ENCODE measurements at regions of chr1 and their contacts with region 1.

Region 1: GRCh38 chr1:21200767-21201166 is 24.1 kb upstream of the EIF4G3 start:
- DNase-seq: peak; percentile 39
- H3K4me3 ChIP-seq: no peak overlapping the region
- H3K27ac ChIP-seq: no peak overlapping the region
- H3K4me1 ChIP-seq: no peaks in the 10 kb centered on the region
- H3K27me3 ChIP-seq: no peaks in the 10 kb centered on the region
- CTCF ChIP-seq: no peak

Region 2: DNA sequence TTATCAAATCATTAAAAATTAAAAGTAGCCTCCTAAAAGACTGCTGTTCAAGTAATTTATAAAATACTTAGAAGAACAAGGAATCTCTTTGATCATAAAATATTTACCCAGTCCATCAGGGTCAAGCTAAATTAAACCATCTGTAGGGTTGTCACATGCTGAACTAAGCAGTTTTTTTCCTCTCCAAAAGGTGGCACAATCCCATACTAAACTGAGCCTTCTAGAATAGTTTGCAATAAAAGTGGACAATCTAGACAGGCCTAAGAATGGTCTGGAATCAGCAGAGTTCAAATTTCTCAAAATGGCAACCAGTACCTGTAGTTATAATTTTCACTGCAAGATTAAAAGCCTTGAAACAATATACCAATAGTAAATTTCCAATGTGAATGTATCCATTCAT is 218.9 kb before region 1 on chr1:
- CTCF ChIA-PET with region 1: no interaction called
- POLR2A ChIA-PET with region 1: no interaction called
- intact Hi-C with region 1: loop called (anchors 1 kb)
- DNase-seq: peak; percentile 37
- H3K4me3 ChIP-seq: no peak overlapping the region
- H3K27ac ChIP-seq: peak overlapping the region; percentile 4
- H3K4me1 ChIP-seq: peaks cover 15% of the 10 kb centered on the region
- H3K27me3 ChIP-seq: no peaks in the 10 kb centered on the region
- CTCF ChIP-seq: peak; percentile 52

Region 3: DNA sequence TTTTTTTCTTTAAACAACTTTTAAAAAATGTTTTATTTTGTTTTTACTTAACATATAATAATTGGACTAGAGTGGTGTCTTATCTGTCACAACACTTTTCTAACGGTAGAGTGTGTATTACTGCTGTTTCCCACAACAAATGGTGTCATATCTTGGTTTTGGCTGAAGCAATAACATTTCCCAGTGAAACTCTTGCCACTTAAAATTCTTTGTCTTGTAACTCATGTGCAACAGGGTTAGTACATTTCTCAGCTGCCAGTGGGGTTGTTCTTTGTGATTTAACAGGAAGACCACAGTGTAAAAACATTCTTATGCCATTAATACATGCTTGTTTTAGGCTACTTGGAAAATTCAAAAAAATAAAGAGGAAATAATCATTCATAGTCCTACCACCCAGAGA is 351.9 kb after region 1 on chr1:
- CTCF ChIA-PET with region 1: no interaction called
- POLR2A ChIA-PET with region 1: no interaction called
- intact Hi-C with region 1: no loop called
- DNase-seq: no peak
- H3K4me3 ChIP-seq: no peak overlapping the region
- H3K27ac ChIP-seq: no peak overlapping the region
- H3K4me1 ChIP-seq: peaks cover 12% of the 10 kb centered on the region
- H3K27me3 ChIP-seq: no peaks in the 10 kb centered on the region
- CTCF ChIP-seq: no peak